Testis (tissue), 5 donors: ENCODE measurements at regions of chr1 and their contacts with region 1.

Region 1: DNA sequence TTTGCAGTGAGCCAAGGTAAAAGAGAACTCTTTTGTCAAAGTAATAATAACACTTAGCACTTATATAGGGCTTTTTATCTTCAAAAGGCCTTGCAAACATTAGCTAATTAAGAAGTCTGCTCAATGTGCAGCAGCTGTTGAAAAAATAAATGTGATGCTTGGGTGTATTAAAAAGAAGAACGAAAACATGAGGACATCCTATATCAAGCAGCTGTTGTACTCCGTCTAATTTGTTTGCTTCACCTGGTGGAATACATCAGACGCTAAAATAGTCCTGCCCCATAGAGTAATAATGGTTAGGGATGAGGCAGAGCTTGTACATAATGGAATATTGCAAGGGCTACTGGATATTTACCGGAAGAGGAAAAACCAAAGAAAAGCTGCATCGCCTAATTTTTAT is 299.5 kb downstream of the ST6GALNAC3 start:
- DNase-seq: no peak
- H3K4me3 ChIP-seq: no peak overlapping the region
- H3K27ac ChIP-seq: no peak overlapping the region
- H3K4me1 ChIP-seq: no peaks in the 10 kb centered on the region
- H3K27me3 ChIP-seq: no peaks in the 10 kb centered on the region
- CTCF ChIP-seq: no peak
- POLR2A ChIP-seq: no peak

Region 2: DNA sequence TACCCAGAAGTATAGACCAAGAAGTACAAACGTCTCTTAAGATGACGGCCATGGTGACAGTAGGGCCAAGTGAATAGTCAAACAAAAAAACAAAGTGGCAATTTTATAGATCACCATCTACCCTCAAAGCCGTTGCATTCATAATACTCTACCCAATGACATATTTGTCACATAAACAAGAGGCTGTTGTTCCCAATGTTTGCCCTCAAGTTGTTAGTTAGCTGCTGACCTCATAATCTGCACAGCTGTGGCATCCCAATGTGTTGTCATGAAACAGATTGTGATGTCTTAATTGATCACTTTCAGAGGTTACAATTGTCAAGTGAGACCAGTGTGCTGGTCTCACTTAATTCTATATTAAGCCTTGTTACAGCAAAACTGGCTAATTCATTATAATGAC is 34.2 kb after region 1 on chr1:
- intact Hi-C with region 1: loop called (anchors 2 kb)
- DNase-seq: no peak
- H3K4me3 ChIP-seq: no peak overlapping the region
- H3K27ac ChIP-seq: no peak overlapping the region
- H3K4me1 ChIP-seq: no peaks in the 10 kb centered on the region
- H3K27me3 ChIP-seq: no peaks in the 10 kb centered on the region
- CTCF ChIP-seq: no peak
- POLR2A ChIP-seq: no peak